ENCODE measurements at regions of chr2 and their contacts with region 1.

Region 1: DNA sequence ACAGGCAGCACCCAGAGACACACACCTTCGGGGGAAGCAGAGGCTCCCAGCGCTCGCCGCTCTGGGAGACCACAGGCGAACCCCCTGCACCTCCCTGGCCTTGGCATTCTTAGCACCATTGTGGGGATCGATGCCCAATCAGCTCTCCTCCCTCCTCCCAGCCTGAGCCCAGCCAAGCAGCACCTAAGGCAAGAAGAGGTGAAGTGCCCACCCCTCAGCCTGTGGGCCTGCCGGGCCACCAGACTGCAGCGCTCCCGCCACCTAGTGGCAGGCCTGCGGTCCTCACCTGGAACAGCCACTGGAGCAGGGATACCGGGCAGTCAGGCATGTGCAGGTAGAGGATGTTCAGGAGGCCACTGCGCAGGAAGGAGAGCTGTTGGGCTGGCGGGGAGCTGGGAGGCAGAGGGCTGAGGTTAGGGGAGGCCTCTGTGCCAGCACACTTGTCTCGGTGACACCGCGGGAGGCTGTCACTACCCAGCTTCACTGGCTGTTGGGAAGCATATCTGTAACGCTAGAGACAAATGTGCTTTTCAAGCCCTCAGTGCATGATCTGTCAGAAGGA is 35.2 kb downstream of the FAM178B start:
- DNase-seq: peak; percentile 91
- ATAC-seq: peak; percentile 96
- H3K4me3 Mint-ChIP-seq: no peak overlapping the region
- H3K27ac Mint-ChIP-seq: no peak overlapping the region
- H3K4me1 Mint-ChIP-seq: peaks cover 11% of the 10 kb centered on the region
- H3K27me3 Mint-ChIP-seq: peaks cover 3% of the 10 kb centered on the region; the same call in 1 of the 2 replicates
- CTCF ChIP-seq: peak; percentile 93

Region 2: DNA sequence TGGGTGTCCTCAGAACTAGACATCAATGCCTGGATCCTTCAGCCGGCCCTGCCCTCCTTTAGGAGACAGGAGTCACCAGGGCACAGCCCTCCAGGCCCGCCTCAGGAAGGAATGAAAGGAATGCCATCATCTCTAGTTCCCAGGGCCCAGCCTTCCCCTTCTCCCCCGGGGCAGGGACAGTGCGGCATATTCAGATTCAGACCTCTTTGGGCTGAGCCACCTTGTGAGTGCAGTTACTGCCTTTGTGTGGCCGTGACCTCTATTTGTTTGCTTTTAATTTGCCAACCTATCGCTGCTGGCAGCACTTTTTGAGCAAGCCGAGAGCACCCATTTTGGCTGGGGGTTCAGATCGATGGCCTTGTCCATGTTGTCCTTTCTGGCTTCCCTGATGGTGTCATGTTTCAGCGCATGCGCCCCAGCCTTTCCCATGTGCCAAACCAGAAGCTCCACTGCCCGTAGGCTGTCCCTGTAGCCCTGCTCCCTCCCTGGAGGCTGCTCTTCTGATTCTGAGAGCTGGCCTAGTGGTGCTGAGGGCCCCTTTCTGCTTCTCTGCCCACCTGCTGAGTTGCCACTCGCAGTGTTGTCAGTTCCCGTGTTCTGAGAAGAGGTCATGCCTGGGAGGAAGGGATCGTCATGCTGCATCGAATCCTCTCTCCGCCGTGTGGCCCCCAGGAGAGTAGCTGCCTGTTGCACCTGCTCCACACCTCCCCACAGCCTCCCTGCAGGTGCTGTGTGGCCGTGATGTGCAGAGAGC is 118.2 kb before region 1 on chr2:
- CTCF ChIA-PET with region 1: interaction called, 14 read pairs
- POLR2A ChIA-PET with region 1: no interaction called
- DNase-seq: peak; percentile 77
- ATAC-seq: peak; percentile 94
- H3K4me3 Mint-ChIP-seq: peak overlapping the region; percentile 64
- H3K27ac Mint-ChIP-seq: peak overlapping the region; percentile 98
- H3K4me1 Mint-ChIP-seq: peaks cover 27% of the 10 kb centered on the region
- H3K27me3 Mint-ChIP-seq: no peaks in the 10 kb centered on the region
- CTCF ChIP-seq: no peak

Region 3: GRCh38 chr2:96874118-96874831 is 76.9 kb before region 1 on chr2:
- CTCF ChIA-PET with region 1: interaction called, 43 read pairs
- POLR2A ChIA-PET with region 1: no interaction called
- DNase-seq: no peak
- ATAC-seq: no peak
- H3K4me3 Mint-ChIP-seq: no peak overlapping the region
- H3K27ac Mint-ChIP-seq: no peak overlapping the region
- H3K4me1 Mint-ChIP-seq: peaks cover 70% of the 10 kb centered on the region
- H3K27me3 Mint-ChIP-seq: 0 out of 2 replicates have a peak, but pooled peaks cover 4% of the 10 kb centered on the region
- CTCF ChIP-seq: no peak

Region 4: GRCh38 chr2:96907115-96908041 is 43.8 kb before region 1 on chr2:
- CTCF ChIA-PET with region 1: interaction called, 20 read pairs
- POLR2A ChIA-PET with region 1: no interaction called
- DNase-seq: peak; percentile 71
- ATAC-seq: peak; percentile 91
- H3K4me3 Mint-ChIP-seq: peak overlapping the region; percentile 8; the same call in 1 of the 2 replicates
- H3K27ac Mint-ChIP-seq: 0 out of 2 replicates have a peak overlapping the region, but pooled peaks have one; percentile 11
- H3K4me1 Mint-ChIP-seq: peaks cover 32% of the 10 kb centered on the region
- H3K27me3 Mint-ChIP-seq: peaks cover 14% of the 10 kb centered on the region
- CTCF ChIP-seq: no peak

Region 5: GRCh38 chr2:96927405-96928243 is 23.6 kb before region 1 on chr2:
- CTCF ChIA-PET with region 1: interaction called, 18 read pairs
- POLR2A ChIA-PET with region 1: interaction called, 3 read pairs
- DNase-seq: no peak
- ATAC-seq: peak; percentile 38; the same call in 1 of the 2 replicates
- H3K4me3 Mint-ChIP-seq: no peak overlapping the region
- H3K27ac Mint-ChIP-seq: no peak overlapping the region
- H3K4me1 Mint-ChIP-seq: peaks cover 23% of the 10 kb centered on the region
- H3K27me3 Mint-ChIP-seq: peaks cover 37% of the 10 kb centered on the region
- CTCF ChIP-seq: no peak

Region 6: DNA sequence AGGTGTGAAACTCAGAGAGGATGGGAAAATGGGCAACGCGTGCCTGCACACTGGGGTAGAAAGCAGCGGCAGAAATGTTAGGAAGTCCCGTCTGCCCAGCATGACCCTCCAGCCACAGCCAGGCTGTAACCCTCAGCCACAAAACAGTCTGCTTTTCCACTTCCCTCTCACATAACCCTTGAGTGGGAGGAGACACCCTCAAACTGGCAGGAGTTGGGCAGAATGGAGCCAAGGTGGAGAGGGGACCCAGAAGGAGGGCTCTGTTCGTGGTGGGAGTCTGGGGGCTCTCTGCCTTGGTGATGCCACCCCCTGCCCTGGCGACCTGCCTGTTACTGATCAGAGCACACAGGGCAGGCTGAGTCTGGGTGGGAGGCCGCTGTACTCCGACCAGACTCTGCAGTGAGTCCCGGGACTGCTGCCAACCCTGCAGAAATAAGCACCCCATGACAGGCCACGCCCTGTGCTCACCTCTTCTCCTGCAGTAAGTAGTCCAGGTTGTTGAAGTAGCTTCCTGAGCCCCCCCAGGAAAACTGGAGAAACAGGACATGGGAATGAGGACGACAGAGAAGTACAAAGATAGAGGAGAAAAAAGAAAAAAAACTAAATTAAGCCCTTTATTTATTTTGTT is 19.2 kb after region 1 on chr2:
- CTCF ChIA-PET with region 1: interaction called, 10 read pairs
- POLR2A ChIA-PET with region 1: no interaction called
- DNase-seq: no peak
- ATAC-seq: no peak
- H3K4me3 Mint-ChIP-seq: no peak overlapping the region
- H3K27ac Mint-ChIP-seq: no peak overlapping the region
- H3K4me1 Mint-ChIP-seq: peaks cover 3% of the 10 kb centered on the region
- H3K27me3 Mint-ChIP-seq: no peaks in the 10 kb centered on the region; the same call in 1 of the 2 replicates
- CTCF ChIP-seq: no peak

Region 7: DNA sequence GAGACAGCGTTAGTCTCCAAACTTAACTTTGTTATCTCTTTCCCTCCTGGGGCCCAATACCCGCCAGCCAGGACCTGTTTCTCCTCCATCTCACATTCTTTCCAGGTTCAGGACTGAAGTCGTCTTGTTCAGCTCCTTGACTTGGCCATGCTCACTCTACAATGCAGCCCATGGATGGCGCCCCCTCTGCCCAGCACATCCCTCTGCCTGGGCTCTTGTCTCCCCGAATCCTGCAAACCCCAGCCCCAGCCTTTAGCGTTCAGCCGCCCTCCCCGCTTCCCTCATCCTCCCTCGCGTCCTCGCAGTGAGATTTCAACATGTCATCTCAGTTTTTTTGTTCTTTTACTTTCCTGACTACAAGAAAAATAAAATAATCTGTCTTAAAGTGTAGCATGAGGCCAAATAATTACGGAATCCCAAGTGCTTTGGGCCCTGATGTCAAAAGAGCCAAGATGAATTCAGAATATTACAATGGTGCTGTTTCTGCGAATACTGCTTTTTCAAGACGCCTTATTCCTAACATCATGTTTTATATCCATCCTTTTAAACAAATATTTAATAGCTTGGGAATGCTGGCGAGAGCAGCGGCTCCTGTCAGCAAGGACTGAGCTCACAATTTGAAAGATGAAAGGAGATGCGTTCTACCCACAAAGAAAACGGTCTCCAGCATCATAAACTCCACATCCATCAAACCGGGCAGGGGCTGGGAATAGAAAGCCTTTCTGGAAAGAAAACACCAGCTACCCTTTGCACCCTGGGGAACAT is 34.2 kb after region 1 on chr2:
- CTCF ChIA-PET with region 1: no interaction called
- POLR2A ChIA-PET with region 1: no interaction called
- DNase-seq: peak; percentile 45
- ATAC-seq: peak; percentile 88
- H3K4me3 Mint-ChIP-seq: no peak overlapping the region
- H3K27ac Mint-ChIP-seq: no peak overlapping the region
- H3K4me1 Mint-ChIP-seq: peaks cover 19% of the 10 kb centered on the region
- H3K27me3 Mint-ChIP-seq: no peaks in the 10 kb centered on the region
- CTCF ChIP-seq: no peak

Measured in WTC11 (cell line).